Psoas muscle (tissue), 8 donors: ENCODE measurements at regions of chr1 and their contacts with region 1.

Region 1: DNA sequence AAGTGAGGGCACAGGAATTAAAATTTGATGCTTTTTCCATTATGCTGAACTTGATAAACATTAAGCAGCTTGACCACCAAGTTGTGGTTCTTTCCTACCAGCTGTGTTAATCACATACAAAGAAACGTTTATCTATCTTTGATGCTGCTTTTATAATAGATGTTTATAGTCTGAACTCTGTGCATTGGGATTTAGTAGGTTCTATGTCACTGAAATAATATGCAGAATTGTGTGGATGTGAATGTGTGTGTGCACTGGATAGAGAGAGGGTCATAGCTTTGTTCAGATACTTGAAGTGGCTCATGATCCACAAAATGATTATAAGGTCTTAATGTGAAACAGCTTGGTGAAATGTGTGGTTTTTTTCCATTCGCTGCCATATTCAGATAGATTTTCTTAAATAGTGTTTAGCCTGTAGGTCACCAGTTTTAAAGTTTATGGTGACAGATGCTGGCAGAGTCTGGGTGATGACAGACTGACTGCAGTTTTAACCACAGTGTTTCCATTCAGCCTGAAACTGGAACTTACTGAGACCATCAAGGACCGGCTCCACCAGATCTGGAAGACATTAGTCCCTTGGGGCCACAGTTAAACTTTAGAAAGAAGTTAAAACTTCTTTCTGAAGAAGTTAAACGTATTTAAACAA is 10.2 kb downstream of the DDI2 start:
- DNase-seq: no peak
- ATAC-seq: no peak
- H3K4me3 ChIP-seq: peak overlapping the region; percentile 24
- H3K27ac ChIP-seq: peak overlapping the region; percentile 99
- H3K4me1 ChIP-seq: peaks cover 87% of the 10 kb centered on the region
- H3K27me3 ChIP-seq: no peaks in the 10 kb centered on the region
- CTCF ChIP-seq: no peak

Region 2: GRCh38 chr1:14987829-14988603 is 639.5 kb before region 1 on chr1:
- intact Hi-C with region 1: no loop called
- DNase-seq: peak; percentile 65 to 77
- ATAC-seq: peak in 3 of 4 donors; percentile 17 to 59 (median 53)
- H3K4me3 ChIP-seq: no peak overlapping the region
- H3K27ac ChIP-seq: no peak overlapping the region
- H3K4me1 ChIP-seq: no peaks in the 10 kb centered on the region
- H3K27me3 ChIP-seq: peaks cover 0 to 5% (median 0%) of the 10 kb centered on the region in 3 donors
- CTCF ChIP-seq: no peak

Region 3: GRCh38 chr1:15538770-15539169 is 88.7 kb before region 1 on chr1:
- intact Hi-C with region 1: loop called in 1 of 2 experiments (anchors 10 kb)
- DNase-seq: no peak
- ATAC-seq: no peak
- H3K4me3 ChIP-seq: no peak overlapping the region
- H3K27ac ChIP-seq: no peak overlapping the region
- H3K4me1 ChIP-seq: no peaks in the 10 kb centered on the region
- H3K27me3 ChIP-seq: no peaks in the 10 kb centered on the region
- CTCF ChIP-seq: no peak

Region 4: GRCh38 chr1:15876357-15877055 is 249.0 kb after region 1 on chr1:
- intact Hi-C with region 1: no loop called
- DNase-seq: no peak
- ATAC-seq: peak; percentile 44 to 69 (median 58)
- H3K4me3 ChIP-seq: no peak overlapping the region
- H3K27ac ChIP-seq: no peak overlapping the region
- H3K4me1 ChIP-seq: peaks cover 64% of the 10 kb centered on the region
- H3K27me3 ChIP-seq: no peaks in the 10 kb centered on the region
- CTCF ChIP-seq: peak; percentile 30